MCF 10A (cell line): ENCODE measurements at regions of chr1 and their contacts with region 1.

Region 1: DNA sequence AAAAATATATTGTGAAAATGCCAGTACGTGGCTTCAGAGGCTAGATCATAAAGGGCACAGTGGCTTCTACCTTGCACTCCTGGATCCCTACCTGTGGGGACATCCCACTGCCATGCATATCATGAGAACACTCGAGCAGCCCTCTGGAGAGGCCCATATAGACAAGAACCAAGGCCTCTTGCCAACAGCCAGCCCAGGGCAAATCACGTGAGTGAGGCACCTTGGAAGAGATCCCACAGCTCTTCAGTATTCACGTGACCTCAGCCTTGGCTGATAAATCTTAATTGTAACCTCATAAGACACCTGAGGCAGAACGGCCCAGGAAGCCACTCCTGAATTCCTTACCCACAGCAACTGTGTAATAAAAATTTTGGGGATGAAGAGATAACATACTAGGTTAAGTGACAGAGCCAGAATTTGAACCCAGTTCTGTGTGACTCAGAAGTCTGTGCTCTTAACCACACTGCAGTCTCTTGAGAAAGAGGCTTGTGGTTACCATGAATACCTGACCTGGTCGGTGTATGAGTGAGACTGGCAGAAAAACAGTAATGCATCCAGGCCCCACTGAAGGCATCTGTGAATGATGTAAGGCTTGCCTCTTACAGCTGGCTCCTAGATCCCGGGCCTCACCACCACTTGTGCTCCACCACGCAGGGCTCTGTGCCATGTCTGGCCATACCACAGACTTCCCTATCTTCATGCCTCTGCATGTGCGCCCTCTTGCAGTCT is 6.9 kb upstream of the A3GALT2 start:
- DNase-seq: peak; percentile 98
- H3K4me3 Mint-ChIP-seq: no peak overlapping the region
- H3K27ac Mint-ChIP-seq: peak overlapping the region; percentile 84
- H3K4me1 Mint-ChIP-seq: peaks cover 51% of the 10 kb centered on the region
- H3K27me3 Mint-ChIP-seq: no peaks in the 10 kb centered on the region
- CTCF ChIP-seq: no peak

Region 2: GRCh38 chr1:33152685-33153432 is 174.9 kb before region 1 on chr1:
- CTCF ChIA-PET with region 1: no interaction called
- POLR2A ChIA-PET with region 1: no interaction called
- intact Hi-C with region 1: no loop called
- DNase-seq: no peak
- H3K4me3 Mint-ChIP-seq: no peak overlapping the region
- H3K27ac Mint-ChIP-seq: no peak overlapping the region
- H3K4me1 Mint-ChIP-seq: no peaks in the 10 kb centered on the region
- H3K27me3 Mint-ChIP-seq: no peaks in the 10 kb centered on the region
- CTCF ChIP-seq: no peak

Region 3: GRCh38 chr1:33342041-33342723 is 14.4 kb after region 1 on chr1:
- CTCF ChIA-PET with region 1: interaction called, 16 read pairs
- POLR2A ChIA-PET with region 1: interaction called, 67 read pairs
- intact Hi-C with region 1: no loop called
- DNase-seq: peak; percentile 93
- H3K4me3 Mint-ChIP-seq: peak overlapping the region; percentile 53
- H3K27ac Mint-ChIP-seq: peak overlapping the region; percentile 85
- H3K4me1 Mint-ChIP-seq: peaks cover 74% of the 10 kb centered on the region
- H3K27me3 Mint-ChIP-seq: no peaks in the 10 kb centered on the region
- CTCF ChIP-seq: no peak

Region 4: DNA sequence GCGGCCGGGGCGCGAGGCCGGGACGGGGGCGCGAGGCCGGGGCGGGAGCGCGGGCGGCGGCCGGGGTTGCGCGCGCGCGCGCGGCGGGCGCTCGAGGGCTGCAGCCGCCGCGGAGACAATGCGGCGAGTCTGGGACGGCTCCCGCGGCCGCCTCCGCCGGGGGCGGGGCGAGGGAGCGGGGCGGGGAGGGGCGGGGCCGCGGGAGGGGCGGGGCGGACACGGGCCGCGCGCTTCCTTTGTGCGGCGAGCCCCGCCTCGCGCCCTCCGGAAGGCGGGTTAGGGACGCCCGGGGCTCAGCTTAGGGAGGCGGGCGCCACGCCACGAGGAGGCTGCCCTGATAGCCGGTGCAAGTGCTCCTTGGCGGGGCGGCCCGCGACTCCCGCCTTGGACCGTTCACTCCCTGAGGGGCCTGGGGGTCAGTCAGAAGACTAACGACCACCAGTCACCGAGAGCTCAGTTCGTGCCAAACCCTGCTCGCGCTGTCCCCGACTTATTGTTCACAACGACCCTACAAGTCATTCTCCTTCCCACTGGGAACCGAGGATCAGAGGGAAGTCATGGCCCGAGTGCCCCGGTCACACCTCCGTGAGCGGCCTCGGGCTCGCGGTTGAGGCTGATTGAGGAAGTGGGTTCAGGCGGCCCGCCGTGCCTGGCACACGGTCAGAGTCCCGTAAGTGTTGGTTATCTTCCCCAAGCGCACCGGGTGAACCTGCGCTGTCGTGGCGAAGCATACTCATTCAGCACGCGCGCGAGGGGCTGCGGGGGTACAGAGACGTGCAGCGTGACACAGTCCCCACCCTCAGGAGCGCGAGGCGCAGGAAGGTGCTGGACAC is 22.2 kb after region 1 on chr1:
- CTCF ChIA-PET with region 1: interaction called, 5 read pairs
- POLR2A ChIA-PET with region 1: interaction called, 67 read pairs
- intact Hi-C with region 1: loop called (anchors 2 kb)
- DNase-seq: peak; percentile 84
- H3K4me3 Mint-ChIP-seq: peak overlapping the region; percentile 87
- H3K27ac Mint-ChIP-seq: peak overlapping the region; percentile 65
- H3K4me1 Mint-ChIP-seq: peaks cover 24% of the 10 kb centered on the region
- H3K27me3 Mint-ChIP-seq: no peaks in the 10 kb centered on the region
- CTCF ChIP-seq: no peak